ENCODE measurements at regions of chr14 and their contacts with region 1.

Region 1: GRCh38 chr14:94129111-94129757 is at the start of gene IFI27L2:
- DNase-seq: peak; percentile 81
- H3K4me3 Mint-ChIP-seq: peak within 1 kb of the TSS; percentile 93
- H3K27ac Mint-ChIP-seq: peak within 1 kb of the TSS; percentile 82
- H3K4me1 Mint-ChIP-seq: peaks cover 25% of the 10 kb centered on the region
- H3K27me3 Mint-ChIP-seq: peaks cover 13% of the 10 kb centered on the region
- total RNA-seq, gene IFI27L2: 100 to 102 TPM

Region 2: GRCh38 chr14:94036313-94037050 is 92.8 kb before region 1 on chr14:
- CTCF ChIA-PET with region 1: interaction called, 178 read pairs
- POLR2A ChIA-PET with region 1: interaction called, 4 read pairs
- DNase-seq: peak; percentile 84
- H3K4me3 Mint-ChIP-seq: no peak overlapping the region
- H3K27ac Mint-ChIP-seq: no peak overlapping the region
- H3K4me1 Mint-ChIP-seq: peaks cover 9% of the 10 kb centered on the region
- H3K27me3 Mint-ChIP-seq: no peaks in the 10 kb centered on the region

Region 3: GRCh38 chr14:94080471-94081289 is 48.6 kb before region 1 on chr14 and contains the start of gene DDX24:
- CTCF ChIA-PET with region 1: interaction called, 18 read pairs
- POLR2A ChIA-PET with region 1: interaction called, 44 read pairs
- DNase-seq: peak; percentile 98
- H3K4me3 Mint-ChIP-seq: peak within 1 kb of the TSS; percentile 98
- H3K27ac Mint-ChIP-seq: peak within 1 kb of the TSS; percentile 98
- H3K4me1 Mint-ChIP-seq: peaks cover 61% of the 10 kb centered on the region
- H3K27me3 Mint-ChIP-seq: no peaks in the 10 kb centered on the region
- total RNA-seq, gene DDX24: 210 to 216 TPM

Region 4: GRCh38 chr14:94173885-94174603 is 44.8 kb after region 1 on chr14 and contains the start of gene PPP4R4:
- CTCF ChIA-PET with region 1: interaction called, 17 read pairs
- POLR2A ChIA-PET with region 1: interaction called, 23 read pairs
- DNase-seq: peak; percentile 92
- H3K4me3 Mint-ChIP-seq: peak within 1 kb of the TSS; percentile 77
- H3K27ac Mint-ChIP-seq: peak within 1 kb of the TSS; percentile 62
- H3K4me1 Mint-ChIP-seq: peaks cover 27% of the 10 kb centered on the region
- H3K27me3 Mint-ChIP-seq: peaks cover 37% of the 10 kb centered on the region
- total RNA-seq, gene PPP4R4: 3.3 to 4.9 TPM

Region 5: GRCh38 chr14:94237046-94237445 is 107.8 kb after region 1 on chr14:
- CTCF ChIA-PET with region 1: no interaction called
- POLR2A ChIA-PET with region 1: no interaction called
- DNase-seq: no peak
- H3K4me3 Mint-ChIP-seq: no peak overlapping the region
- H3K27ac Mint-ChIP-seq: no peak overlapping the region
- H3K4me1 Mint-ChIP-seq: peaks cover 11% of the 10 kb centered on the region
- H3K27me3 Mint-ChIP-seq: no peaks in the 10 kb centered on the region

Region 6: DNA sequence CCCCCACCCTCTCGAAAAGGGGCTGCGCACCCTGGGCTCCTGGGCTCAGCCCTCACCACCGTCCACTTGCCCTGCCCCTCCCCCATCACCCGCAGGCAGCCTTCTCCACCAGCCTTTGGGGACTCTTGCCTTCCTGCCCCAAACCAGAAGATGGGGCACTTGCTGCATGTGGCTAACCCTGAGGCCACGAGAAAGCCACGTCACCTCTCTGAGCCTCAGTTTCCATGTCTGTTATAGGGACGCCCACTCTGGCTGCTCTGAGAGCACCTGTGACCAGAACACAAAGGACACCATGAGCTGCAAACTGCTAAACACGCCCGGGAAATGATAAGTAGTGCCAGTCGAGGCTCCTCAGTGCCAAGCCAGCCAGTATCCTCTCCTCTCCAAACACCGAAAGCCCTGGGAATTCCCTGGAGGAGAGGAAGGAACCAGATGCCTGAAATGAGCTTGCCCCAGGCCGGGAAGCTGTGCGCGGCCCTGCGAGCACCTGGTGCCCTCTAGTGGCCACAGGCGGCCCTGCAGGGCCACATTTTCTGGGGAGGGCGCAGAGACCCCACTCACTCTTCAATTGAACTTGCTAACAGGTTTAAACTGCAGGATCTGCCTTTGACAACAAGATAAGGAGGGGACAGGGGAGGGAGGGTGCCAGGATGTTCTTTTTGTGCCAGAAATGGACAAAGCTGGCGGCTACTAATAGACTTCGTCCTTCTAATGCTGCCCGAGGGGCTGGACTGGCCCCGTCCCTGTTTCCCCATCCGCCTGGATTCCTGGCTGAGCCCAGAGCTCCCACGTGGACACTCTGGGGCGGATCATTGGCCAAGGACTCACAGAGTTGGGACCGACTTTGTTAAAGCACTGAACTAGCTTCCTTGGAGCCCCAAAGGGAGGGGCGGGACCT is 357.0 kb after region 1 on chr14:
- CTCF ChIA-PET with region 1: interaction called, 12 read pairs
- POLR2A ChIA-PET with region 1: no interaction called
- DNase-seq: peak; percentile 38
- H3K4me3 Mint-ChIP-seq: no peak overlapping the region
- H3K27ac Mint-ChIP-seq: no peak overlapping the region
- H3K4me1 Mint-ChIP-seq: no peaks in the 10 kb centered on the region
- H3K27me3 Mint-ChIP-seq: no peaks in the 10 kb centered on the region